SK-N-SH (cell line): ENCODE measurements at regions of chr3 and their contacts with region 1.

Region 1: DNA sequence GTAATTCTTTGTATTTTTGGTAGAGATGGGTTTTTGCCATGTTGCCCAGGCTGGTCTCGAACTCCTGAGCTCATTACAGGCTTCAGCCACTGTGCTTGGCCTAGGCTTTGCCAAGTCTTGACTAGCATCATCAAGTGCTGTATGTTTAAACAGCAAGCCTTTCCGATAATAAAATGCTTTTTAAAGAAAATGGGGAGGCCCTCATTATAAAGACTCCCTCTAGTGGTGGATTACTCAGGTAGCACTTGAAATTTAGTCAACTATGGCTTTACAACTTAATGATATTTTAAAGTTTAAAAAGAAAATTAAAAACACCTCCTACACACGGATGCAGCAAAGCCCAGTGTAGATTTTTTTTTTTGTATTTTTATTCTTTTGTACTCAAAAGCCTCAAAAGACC is 213.6 kb downstream of the GAP43 start:
- DNase-seq: peak; percentile 16
- H3K4me3 ChIP-seq: no peak overlapping the region; a peak in 1 of 4 replicates
- H3K27ac ChIP-seq: no peak overlapping the region
- H3K4me1 ChIP-seq: peaks cover 7 to 31% of the 10 kb centered on the region in 2 experiments; a peak in 2 of 4 replicates
- H3K27me3 ChIP-seq: no peaks in the 10 kb centered on the region
- CTCF ChIP-seq: peak; percentile 79
- EP300 ChIP-seq: no peak
- RAD21 ChIP-seq: 0 out of 2 replicates have a peak, but pooled peaks have one; percentile 10

Region 2: GRCh38 chr3:115848641-115849040 is 11.7 kb after region 1 on chr3:
- CTCF ChIA-PET with region 1: interaction called, 10 read pairs
- POLR2A ChIA-PET with region 1: no interaction called
- DNase-seq: no peak
- H3K4me3 ChIP-seq: no peak overlapping the region
- H3K27ac ChIP-seq: no peak overlapping the region
- H3K4me1 ChIP-seq: peaks cover 0 to 7% of the 10 kb centered on the region in 2 experiments; a peak in 3 of 4 replicates
- H3K27me3 ChIP-seq: no peaks in the 10 kb centered on the region
- CTCF ChIP-seq: no peak
- EP300 ChIP-seq: no peak
- RAD21 ChIP-seq: no peak